Heart left ventricle (tissue), 16 donors: ENCODE measurements at regions of chr2 and their contacts with region 1.

Region 1: GRCh38 chr2:49515996-49516782 is 361.9 kb upstream of the FSHR start:
- DNase-seq: no peak
- ATAC-seq: no peak
- H3K4me3 ChIP-seq: no peak overlapping the region
- H3K27ac ChIP-seq: no peak overlapping the region
- H3K4me1 ChIP-seq: no peaks in the 10 kb centered on the region
- H3K27me3 ChIP-seq: no peaks in the 10 kb centered on the region
- CTCF ChIP-seq: no peak
- POLR2A ChIP-seq: no peak

Region 2: GRCh38 chr2:49845021-49845420 is 328.8 kb after region 1 on chr2:
- intact Hi-C with region 1: loop called in 1 of 10 experiments (anchors 5 kb)
- DNase-seq: no peak
- ATAC-seq: no peak
- H3K4me3 ChIP-seq: no peak overlapping the region
- H3K27ac ChIP-seq: no peak overlapping the region
- H3K4me1 ChIP-seq: no peaks in the 10 kb centered on the region
- H3K27me3 ChIP-seq: no peaks in the 10 kb centered on the region
- CTCF ChIP-seq: no peak
- POLR2A ChIP-seq: no peak